Naive thymus-derived CD4-positive, alpha-beta T cell (primary cell): ENCODE measurements at regions of chr1 and their contacts with region 1.

Region 1: GRCh38 chr1:183915625-183916510 is 110.9 kb downstream of the RGL1 start:
- DNase-seq: peak; percentile 16 to 80 (median 71)
- ATAC-seq: peak; percentile 96
- H3K4me3 ChIP-seq: no peak overlapping the region
- H3K4me3 Mint-ChIP-seq: peak overlapping the region in 8 of 10 donors; percentile 19 to 48 (median 38)
- H3K27ac ChIP-seq: no peak overlapping the region
- H3K27ac Mint-ChIP-seq: peak overlapping the region in 4 of 9 donors; percentile 7 to 70 (median 45)
- H3K4me1 ChIP-seq: peaks cover 0 to 5% of the 10 kb centered on the region in 2 donors
- H3K4me1 Mint-ChIP-seq: peaks cover 6 to 17% (median 8%) of the 10 kb centered on the region in 7 donors
- H3K27me3 ChIP-seq: no peaks in the 10 kb centered on the region
- H3K27me3 Mint-ChIP-seq: no peaks in the 10 kb centered on the region

Region 2: GRCh38 chr1:183281553-183282091 is 634.2 kb before region 1 on chr1:
- CTCF ChIA-PET with region 1: interaction called, 4 read pairs
- POLR2A ChIA-PET with region 1: no interaction called
- intact Hi-C with region 1: loop called in 1 of 2 experiments (anchors 1 kb)
- DNase-seq: peak; percentile 42 to 69 (median 49)
- ATAC-seq: peak; percentile 73
- H3K4me3 ChIP-seq: no peak overlapping the region
- H3K4me3 Mint-ChIP-seq: no peak overlapping the region
- H3K27ac ChIP-seq: no peak overlapping the region
- H3K27ac Mint-ChIP-seq: peak overlapping the region in 1 of 9 donors; percentile 60
- H3K4me1 ChIP-seq: no peaks in the 10 kb centered on the region
- H3K4me1 Mint-ChIP-seq: peaks cover 0 to 14% (median 3%) of the 10 kb centered on the region in 7 donors
- H3K27me3 ChIP-seq: no peaks in the 10 kb centered on the region
- H3K27me3 Mint-ChIP-seq: peaks cover 0 to 10% (median 5%) of the 10 kb centered on the region in 5 donors

Region 3: DNA sequence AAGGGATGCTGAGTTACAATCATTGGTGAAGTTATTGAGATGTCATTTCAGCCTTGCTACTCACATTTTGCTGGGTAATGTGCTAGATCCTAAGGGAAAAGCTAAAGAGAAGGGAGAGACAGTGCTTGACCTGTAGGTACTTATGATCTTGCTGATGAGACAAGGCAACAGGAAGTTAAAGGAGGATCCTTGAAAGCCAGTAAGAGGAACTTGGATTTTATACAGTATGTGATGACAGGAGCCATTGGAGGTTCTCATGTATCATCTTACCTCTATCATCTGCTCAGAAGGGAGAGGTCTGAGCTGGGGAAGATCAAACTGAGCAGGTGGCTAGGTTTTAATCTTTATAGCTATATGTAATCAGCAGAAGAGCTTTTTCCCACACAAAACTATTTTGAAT is 269.1 kb before region 1 on chr1:
- CTCF ChIA-PET with region 1: interaction called, 130 read pairs
- POLR2A ChIA-PET with region 1: no interaction called
- intact Hi-C with region 1: no loop called
- DNase-seq: no peak
- ATAC-seq: no peak
- H3K4me3 ChIP-seq: no peak overlapping the region
- H3K4me3 Mint-ChIP-seq: no peak overlapping the region
- H3K27ac ChIP-seq: no peak overlapping the region
- H3K27ac Mint-ChIP-seq: no peak overlapping the region
- H3K4me1 ChIP-seq: peaks cover 5 to 6% of the 10 kb centered on the region in 2 donors
- H3K4me1 Mint-ChIP-seq: peaks cover 6 to 13% (median 9%) of the 10 kb centered on the region in 7 donors
- H3K27me3 ChIP-seq: no peaks in the 10 kb centered on the region
- H3K27me3 Mint-ChIP-seq: peaks cover 0 to 4% (median 0%) of the 10 kb centered on the region in 5 donors

Region 4: DNA sequence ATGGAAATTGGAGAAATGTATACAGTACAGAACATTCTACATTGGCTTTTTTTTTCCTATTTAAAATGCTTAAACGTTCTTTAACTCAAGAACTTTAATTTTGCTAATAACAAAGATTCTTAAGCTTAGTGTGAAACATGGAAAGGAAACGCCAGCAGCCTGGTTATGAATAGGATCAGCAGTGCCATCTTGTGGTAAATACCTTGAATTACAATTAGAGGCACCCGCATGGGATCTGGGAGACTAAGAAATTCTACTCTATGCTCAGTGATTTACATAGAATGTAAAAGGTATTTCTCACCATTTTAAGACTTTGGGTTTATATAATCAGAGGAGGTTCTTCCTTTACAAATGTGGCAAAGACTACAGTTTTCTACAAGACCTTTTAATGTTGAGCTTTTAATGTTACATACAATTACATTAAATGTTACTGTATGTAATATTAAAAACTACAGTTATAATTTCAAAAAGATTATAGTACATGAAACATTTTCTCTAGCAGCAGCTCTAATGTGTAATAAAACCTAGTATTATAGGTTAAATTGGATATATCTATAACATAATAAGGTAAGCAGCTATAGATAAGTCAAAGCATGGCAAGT is 230.7 kb before region 1 on chr1:
- CTCF ChIA-PET with region 1: interaction called, 37 read pairs
- POLR2A ChIA-PET with region 1: no interaction called
- intact Hi-C with region 1: loop called (anchors 1 kb)
- DNase-seq: peak in 7 of 9 donors; percentile 20 to 63 (median 54)
- ATAC-seq: peak; percentile 86
- H3K4me3 ChIP-seq: no peak overlapping the region
- H3K4me3 Mint-ChIP-seq: no peak overlapping the region
- H3K27ac ChIP-seq: no peak overlapping the region
- H3K27ac Mint-ChIP-seq: no peak overlapping the region
- H3K4me1 ChIP-seq: no peaks in the 10 kb centered on the region
- H3K4me1 Mint-ChIP-seq: peaks cover 0 to 4% (median 0%) of the 10 kb centered on the region in 7 donors
- H3K27me3 ChIP-seq: no peaks in the 10 kb centered on the region
- H3K27me3 Mint-ChIP-seq: peaks cover 0 to 30% (median 0%) of the 10 kb centered on the region in 5 donors

Region 5: GRCh38 chr1:183804881-183805841 is 110.7 kb before region 1 on chr1 and contains the start of gene RGL1:
- CTCF ChIA-PET with region 1: no interaction called
- POLR2A ChIA-PET with region 1: no interaction called
- intact Hi-C with region 1: loop called in 1 of 2 experiments (anchors 10 kb)
- DNase-seq: peak in 7 of 9 donors; percentile 10 to 43 (median 14)
- ATAC-seq: peak; percentile 77
- H3K4me3 ChIP-seq: peak within 1 kb of the TSS; percentile 55
- H3K4me3 Mint-ChIP-seq: peak within 1 kb of the TSS; percentile 84 to 98 (median 89)
- H3K27ac ChIP-seq: no peak within 1 kb of the TSS
- H3K27ac Mint-ChIP-seq: peak within 1 kb of the TSS in 4 of 9 donors; percentile 19 to 55 (median 36)
- H3K4me1 ChIP-seq: peaks cover 0 to 5% of the 10 kb centered on the region in 2 donors
- H3K4me1 Mint-ChIP-seq: peaks cover 10 to 20% (median 17%) of the 10 kb centered on the region in 7 donors
- H3K27me3 ChIP-seq: no peaks in the 10 kb centered on the region
- H3K27me3 Mint-ChIP-seq: peaks cover 5 to 25% (median 15%) of the 10 kb centered on the region in 5 donors
- total RNA-seq, gene RGL1: 0.98 to 6.2 (median 4.0) TPM

Region 6: DNA sequence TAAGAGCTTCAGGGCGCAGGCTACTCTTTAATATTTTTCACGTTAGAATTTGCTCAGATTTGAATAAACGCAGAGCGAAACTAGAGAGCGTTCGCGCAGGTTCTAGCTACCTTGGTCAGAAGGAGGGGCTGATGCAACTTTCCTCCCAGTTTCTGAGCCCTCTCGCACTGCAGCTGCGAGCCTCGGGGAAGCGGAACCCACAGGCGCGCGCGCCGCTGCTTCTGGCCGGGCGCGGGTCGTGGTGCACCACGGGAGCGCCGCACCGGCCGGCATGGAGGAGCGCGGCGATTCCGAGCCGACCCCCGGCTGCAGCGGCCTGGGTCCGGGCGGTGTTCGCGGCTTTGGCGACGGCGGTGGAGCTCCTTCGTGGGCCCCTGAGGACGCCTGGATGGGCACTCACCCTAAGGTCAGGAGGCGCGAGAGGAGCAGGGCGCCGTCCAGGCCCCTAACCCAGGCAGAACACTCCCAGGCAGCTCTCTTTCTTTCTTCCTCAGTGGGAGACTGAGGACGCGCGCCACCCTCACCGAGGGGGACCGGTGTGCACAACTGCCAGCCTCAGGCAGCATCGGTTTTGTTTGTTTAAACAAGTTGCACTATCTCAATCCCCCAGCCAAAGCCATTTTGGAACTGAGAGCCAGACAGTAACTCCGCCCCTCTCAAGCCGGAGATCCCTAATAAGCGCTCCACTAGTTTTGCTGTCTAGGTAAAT is 135.8 kb after region 1 on chr1 and contains the start of gene TSEN15:
- CTCF ChIA-PET with region 1: interaction called, 3 read pairs
- POLR2A ChIA-PET with region 1: interaction called, 5 read pairs
- intact Hi-C with region 1: loop called in 1 of 2 experiments (anchors 5 kb)
- DNase-seq: peak; percentile 54 to 75 (median 68)
- ATAC-seq: peak; percentile 98
- H3K4me3 ChIP-seq: peak within 1 kb of the TSS; percentile 87
- H3K4me3 Mint-ChIP-seq: peak within 1 kb of the TSS; percentile 91 to 99 (median 98)
- H3K27ac ChIP-seq: peak within 1 kb of the TSS; percentile 77
- H3K27ac Mint-ChIP-seq: peak within 1 kb of the TSS; percentile 89 to 99 (median 95)
- H3K4me1 ChIP-seq: peaks cover 19 to 23% of the 10 kb centered on the region in 2 donors
- H3K4me1 Mint-ChIP-seq: peaks cover 18 to 56% (median 45%) of the 10 kb centered on the region in 7 donors
- H3K27me3 ChIP-seq: peaks cover 0 to 3% of the 10 kb centered on the region in 2 donors
- H3K27me3 Mint-ChIP-seq: peaks cover 13 to 33% (median 20%) of the 10 kb centered on the region in 5 donors
- total RNA-seq, gene TSEN15: 12.7 to 48.9 (median 31.1) TPM